ENCODE measurements at regions of chr11 and their contacts with region 1.

Region 1: DNA sequence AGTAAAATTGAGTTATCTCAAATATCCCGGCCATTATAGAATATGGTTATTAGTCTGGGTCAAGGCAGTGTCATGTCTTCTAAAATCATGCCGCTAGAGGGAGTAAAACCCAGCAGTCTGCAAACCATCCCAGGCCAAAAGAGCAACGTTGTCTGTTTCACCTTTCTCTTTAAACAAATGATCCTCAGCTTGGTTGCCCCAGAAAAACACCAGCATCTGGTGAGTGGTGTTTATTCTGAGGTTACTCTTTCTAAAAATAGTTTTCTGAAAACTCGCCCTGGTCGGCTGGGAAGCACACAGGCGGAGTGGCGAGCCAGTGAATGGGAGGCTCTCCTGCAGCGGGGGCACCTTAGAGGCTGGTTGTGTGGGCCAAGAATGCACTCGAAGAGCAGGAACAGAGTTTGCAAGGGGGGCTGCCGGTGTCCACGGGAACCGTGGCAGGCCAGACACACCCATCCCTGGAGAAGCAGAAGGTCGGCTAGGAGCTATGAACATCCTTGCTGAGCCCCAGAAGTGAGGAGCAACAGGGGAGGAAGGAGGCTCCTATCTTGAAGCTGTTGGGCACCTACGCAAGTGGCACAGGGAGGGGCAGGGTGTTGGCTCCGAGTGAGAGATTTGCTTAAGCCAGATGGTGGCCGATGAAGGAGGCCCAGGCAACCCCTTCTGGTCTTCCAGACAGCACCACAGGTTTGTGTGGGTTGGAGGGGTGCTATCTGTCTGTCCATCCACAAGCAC is 297.1 kb downstream of the ETS1 start:
- DNase-seq: peak; percentile 83
- H3K4me3 Mint-ChIP-seq: peak overlapping the region; percentile 87
- H3K27ac Mint-ChIP-seq: peak overlapping the region; percentile 96
- H3K4me1 Mint-ChIP-seq: peaks cover 98% of the 10 kb centered on the region
- H3K27me3 Mint-ChIP-seq: no peaks in the 10 kb centered on the region

Region 2: GRCh38 chr11:127898422-127899365 is 391.6 kb before region 1 on chr11:
- CTCF ChIA-PET with region 1: no interaction called
- intact Hi-C with region 1: no loop called
- DNase-seq: no peak
- H3K4me3 Mint-ChIP-seq: no peak overlapping the region
- H3K27ac Mint-ChIP-seq: no peak overlapping the region
- H3K4me1 Mint-ChIP-seq: no peaks in the 10 kb centered on the region
- H3K27me3 Mint-ChIP-seq: peaks cover 4% of the 10 kb centered on the region

Region 3: GRCh38 chr11:128052912-128053641 is 237.2 kb before region 1 on chr11:
- CTCF ChIA-PET with region 1: no interaction called
- intact Hi-C with region 1: loop called (anchors 5 kb)
- DNase-seq: no peak
- H3K4me3 Mint-ChIP-seq: peak overlapping the region; percentile 49
- H3K27ac Mint-ChIP-seq: peak overlapping the region; percentile 86
- H3K4me1 Mint-ChIP-seq: peaks cover 67% of the 10 kb centered on the region
- H3K27me3 Mint-ChIP-seq: no peaks in the 10 kb centered on the region

Region 4: GRCh38 chr11:128182844-128183243 is 107.4 kb before region 1 on chr11:
- CTCF ChIA-PET with region 1: no interaction called
- intact Hi-C with region 1: no loop called
- DNase-seq: no peak
- H3K4me3 Mint-ChIP-seq: no peak overlapping the region
- H3K27ac Mint-ChIP-seq: no peak overlapping the region
- H3K4me1 Mint-ChIP-seq: peaks cover 8% of the 10 kb centered on the region
- H3K27me3 Mint-ChIP-seq: no peaks in the 10 kb centered on the region

Region 5: GRCh38 chr11:128232588-128232987 is 57.7 kb before region 1 on chr11:
- CTCF ChIA-PET with region 1: interaction called, 4 read pairs
- intact Hi-C with region 1: loop called (anchors 1 kb)
- DNase-seq: peak; percentile 59
- H3K4me3 Mint-ChIP-seq: no peak overlapping the region
- H3K27ac Mint-ChIP-seq: peak overlapping the region; percentile 31
- H3K4me1 Mint-ChIP-seq: peaks cover 49% of the 10 kb centered on the region
- H3K27me3 Mint-ChIP-seq: no peaks in the 10 kb centered on the region

Region 6: GRCh38 chr11:128342511-128343134 is 52.4 kb after region 1 on chr11:
- CTCF ChIA-PET with region 1: interaction called, 16 read pairs
- intact Hi-C with region 1: loop called (anchors 1 kb)
- DNase-seq: peak; percentile 93
- H3K4me3 Mint-ChIP-seq: peak overlapping the region; percentile 73
- H3K27ac Mint-ChIP-seq: peak overlapping the region; percentile 89
- H3K4me1 Mint-ChIP-seq: peaks cover 93% of the 10 kb centered on the region
- H3K27me3 Mint-ChIP-seq: no peaks in the 10 kb centered on the region

Region 7: GRCh38 chr11:128501632-128502549 is 211.6 kb after region 1 on chr11:
- CTCF ChIA-PET with region 1: interaction called, 12 read pairs
- intact Hi-C with region 1: loop called (anchors 1 kb)
- DNase-seq: peak; percentile 8
- H3K4me3 Mint-ChIP-seq: peak overlapping the region; percentile 78
- H3K27ac Mint-ChIP-seq: peak overlapping the region; percentile 97
- H3K4me1 Mint-ChIP-seq: peaks cover 96% of the 10 kb centered on the region
- H3K27me3 Mint-ChIP-seq: no peaks in the 10 kb centered on the region

Region 8: GRCh38 chr11:128582496-128583366 is 292.5 kb after region 1 on chr11:
- CTCF ChIA-PET with region 1: no interaction called
- intact Hi-C with region 1: loop called (anchors 1 kb)
- DNase-seq: peak; percentile 50
- H3K4me3 Mint-ChIP-seq: peak overlapping the region; percentile 69
- H3K27ac Mint-ChIP-seq: peak overlapping the region; percentile 78
- H3K4me1 Mint-ChIP-seq: peaks cover 62% of the 10 kb centered on the region
- H3K27me3 Mint-ChIP-seq: no peaks in the 10 kb centered on the region

Region 9: GRCh38 chr11:128757235-128757711 is 467.0 kb after region 1 on chr11:
- CTCF ChIA-PET with region 1: interaction called, 3 read pairs
- intact Hi-C with region 1: loop called (anchors 1 kb)
- DNase-seq: peak; percentile 85
- H3K4me3 Mint-ChIP-seq: peak overlapping the region; percentile 14
- H3K27ac Mint-ChIP-seq: peak overlapping the region; percentile 86
- H3K4me1 Mint-ChIP-seq: peaks cover 74% of the 10 kb centered on the region
- H3K27me3 Mint-ChIP-seq: no peaks in the 10 kb centered on the region

Measured in activated naive CD4-positive, alpha-beta T cell treated with anti-CD3 and anti-CD28 coated beads for 36 hours (primary cell).